Activated naive CD4-positive, alpha-beta T cell treated with anti-CD3 and anti-CD28 coated beads for 36 hours (primary cell): ENCODE measurements at regions of chr20 and their contacts with region 1.

Region 1: GRCh38 chr20:49888345-49888966 is 26.9 kb downstream of the SPATA2 start:
- DNase-seq: peak; percentile 68
- H3K4me3 Mint-ChIP-seq: no peak overlapping the region
- H3K27ac Mint-ChIP-seq: peak overlapping the region; percentile 59
- H3K4me1 Mint-ChIP-seq: peaks cover 4% of the 10 kb centered on the region
- H3K27me3 Mint-ChIP-seq: no peaks in the 10 kb centered on the region

Region 2: DNA sequence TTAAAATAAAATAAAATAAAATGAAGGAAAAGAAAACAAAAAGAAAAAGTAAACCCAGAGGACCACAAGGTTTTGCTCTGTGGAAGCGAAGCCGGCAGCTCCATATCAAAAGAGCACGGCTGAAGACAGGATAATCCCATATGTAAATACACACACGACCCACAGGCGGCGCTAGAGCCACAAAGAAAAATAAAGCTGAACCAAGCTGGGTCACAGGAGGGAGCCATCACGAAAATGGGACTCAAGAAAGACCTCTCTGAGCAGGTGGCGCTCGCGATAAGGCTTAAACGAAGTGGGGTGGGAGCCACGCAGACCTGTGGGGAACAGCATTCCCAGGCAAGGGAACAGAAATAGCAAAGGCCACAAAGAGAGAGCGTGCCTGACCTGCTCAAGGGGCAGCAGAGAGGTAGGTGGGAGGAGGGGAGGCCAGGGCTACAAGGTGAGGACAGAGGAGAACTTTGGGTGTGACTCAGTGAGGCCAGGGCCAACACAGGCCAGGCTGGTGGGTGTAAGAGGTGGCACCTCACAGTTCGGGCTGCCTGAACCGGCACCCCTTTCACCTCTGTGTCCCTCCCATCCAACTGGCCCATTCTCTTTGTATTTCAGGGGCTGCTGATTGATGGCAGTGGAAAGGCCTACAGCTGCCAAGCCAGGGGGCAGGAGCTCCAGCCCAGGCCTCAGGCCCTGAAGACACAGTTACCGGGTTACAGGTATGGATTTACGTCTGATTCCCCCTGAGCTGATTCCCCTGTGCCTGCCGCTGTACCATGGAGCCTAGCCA is 346.5 kb before region 1 on chr20:
- CTCF ChIA-PET with region 1: interaction called, 5 read pairs
- intact Hi-C with region 1: loop called (anchors 10 kb)
- DNase-seq: peak; percentile 79
- H3K4me3 Mint-ChIP-seq: no peak overlapping the region
- H3K27ac Mint-ChIP-seq: no peak overlapping the region
- H3K4me1 Mint-ChIP-seq: no peaks in the 10 kb centered on the region
- H3K27me3 Mint-ChIP-seq: peaks cover 10% of the 10 kb centered on the region

Region 3: GRCh38 chr20:49901588-49901987 is 13.1 kb after region 1 on chr20:
- CTCF ChIA-PET with region 1: interaction called, 20 read pairs
- intact Hi-C with region 1: no loop called
- DNase-seq: no peak
- H3K4me3 Mint-ChIP-seq: no peak overlapping the region
- H3K27ac Mint-ChIP-seq: no peak overlapping the region
- H3K4me1 Mint-ChIP-seq: no peaks in the 10 kb centered on the region
- H3K27me3 Mint-ChIP-seq: no peaks in the 10 kb centered on the region

Region 4: DNA sequence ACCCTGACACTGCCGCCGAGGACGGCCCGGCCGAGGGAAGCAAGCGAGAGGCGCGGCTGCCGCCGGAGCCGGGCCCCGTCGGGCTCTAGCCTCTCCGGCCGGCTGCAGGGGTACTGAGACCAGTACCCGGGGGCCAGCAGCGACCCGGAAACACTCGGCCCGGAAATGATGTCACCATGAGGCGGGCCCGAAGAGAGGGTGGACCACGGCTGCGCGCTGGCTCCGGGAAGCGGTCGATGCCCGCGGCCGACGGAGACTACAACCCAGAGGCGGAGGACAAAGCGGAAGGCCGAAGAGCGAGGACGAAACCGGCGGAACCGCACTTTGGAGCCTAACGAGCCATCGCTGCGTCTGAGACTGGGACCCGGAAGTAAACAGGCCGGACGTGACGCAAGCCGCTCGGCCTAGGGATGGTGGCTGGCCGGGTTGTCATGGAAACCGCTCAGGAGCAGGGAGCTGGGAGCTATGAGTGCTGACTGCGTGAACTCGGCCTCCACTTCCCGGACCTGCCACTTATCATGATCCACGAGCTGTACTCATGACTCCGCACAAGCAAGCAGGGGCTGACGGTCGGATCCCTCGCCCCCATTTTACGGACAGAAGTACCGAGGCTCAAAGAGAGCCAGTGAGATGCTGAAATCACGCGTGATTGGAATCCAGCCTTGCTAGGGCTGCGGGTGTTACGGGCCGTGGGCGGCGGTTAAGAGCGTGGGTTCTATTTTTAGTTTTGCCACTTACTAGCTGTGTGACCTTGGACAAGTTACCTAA is 27.1 kb after region 1 on chr20 and contains the start of gene SPATA2:
- CTCF ChIA-PET with region 1: interaction called, 15 read pairs
- intact Hi-C with region 1: no loop called
- DNase-seq: peak; percentile 93
- H3K4me3 Mint-ChIP-seq: peak within 1 kb of the TSS; percentile 99
- H3K27ac Mint-ChIP-seq: peak within 1 kb of the TSS; percentile 100
- H3K4me1 Mint-ChIP-seq: peaks cover 34% of the 10 kb centered on the region
- H3K27me3 Mint-ChIP-seq: no peaks in the 10 kb centered on the region
- total RNA-seq, gene SPATA2: 6.6 to 7.3 TPM

Region 5: GRCh38 chr20:49928401-49929141 is 40.1 kb after region 1 on chr20:
- CTCF ChIA-PET with region 1: interaction called, 3 read pairs
- intact Hi-C with region 1: loop called (anchors 2 kb)
- DNase-seq: peak; percentile 90
- H3K4me3 Mint-ChIP-seq: no peak overlapping the region
- H3K27ac Mint-ChIP-seq: no peak overlapping the region
- H3K4me1 Mint-ChIP-seq: peaks cover 5% of the 10 kb centered on the region
- H3K27me3 Mint-ChIP-seq: no peaks in the 10 kb centered on the region

Region 6: GRCh38 chr20:50070991-50071888 is 182.8 kb after region 1 on chr20:
- CTCF ChIA-PET with region 1: no interaction called
- intact Hi-C with region 1: no loop called
- DNase-seq: peak; percentile 92
- H3K4me3 Mint-ChIP-seq: peak overlapping the region; percentile 71
- H3K27ac Mint-ChIP-seq: no peak overlapping the region
- H3K4me1 Mint-ChIP-seq: peaks cover 5% of the 10 kb centered on the region
- H3K27me3 Mint-ChIP-seq: no peaks in the 10 kb centered on the region